ENCODE measurements at regions of chr2 and their contacts with region 1.

Region 1: DNA sequence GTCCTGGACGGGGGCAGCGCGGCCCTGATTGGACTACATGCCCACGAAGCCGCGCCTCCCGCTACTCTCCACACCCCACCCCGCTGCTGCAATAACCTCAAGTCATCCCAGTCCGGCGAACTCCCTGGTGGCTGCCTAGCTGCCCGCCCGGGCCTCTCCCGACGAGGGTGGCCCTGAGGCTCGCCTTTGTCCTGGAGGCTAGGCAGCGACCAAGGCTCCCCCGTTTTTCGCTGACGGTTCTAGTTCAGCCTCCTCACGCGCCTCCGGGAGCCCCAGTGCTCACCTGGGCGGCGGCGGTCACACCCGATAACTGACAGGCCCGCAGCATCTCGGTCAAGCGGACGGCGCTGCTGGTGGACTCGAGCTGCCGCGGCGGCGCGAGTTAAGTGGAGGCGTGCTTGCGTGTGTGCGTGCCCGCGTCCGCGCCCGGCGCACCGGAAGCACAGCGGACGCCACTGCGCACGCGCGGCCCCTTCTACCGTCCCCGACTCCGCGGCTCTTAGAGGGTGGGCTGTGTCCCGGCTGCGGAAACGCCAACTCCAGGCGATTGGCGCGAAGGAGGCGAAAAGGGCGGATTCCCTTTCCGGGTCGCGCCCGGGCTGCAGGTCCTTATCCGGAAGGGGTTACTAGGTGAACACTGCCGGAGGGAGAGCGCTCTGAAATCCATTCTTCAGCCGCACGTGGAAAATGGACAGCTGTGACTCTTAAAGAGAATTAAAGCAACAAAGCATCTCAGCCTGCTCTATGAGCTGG is at the start of gene IMMT:
- DNase-seq: peak; percentile 98
- ATAC-seq: peak; percentile 95
- total RNA-seq, gene IMMT: 287 TPM

Region 2: DNA sequence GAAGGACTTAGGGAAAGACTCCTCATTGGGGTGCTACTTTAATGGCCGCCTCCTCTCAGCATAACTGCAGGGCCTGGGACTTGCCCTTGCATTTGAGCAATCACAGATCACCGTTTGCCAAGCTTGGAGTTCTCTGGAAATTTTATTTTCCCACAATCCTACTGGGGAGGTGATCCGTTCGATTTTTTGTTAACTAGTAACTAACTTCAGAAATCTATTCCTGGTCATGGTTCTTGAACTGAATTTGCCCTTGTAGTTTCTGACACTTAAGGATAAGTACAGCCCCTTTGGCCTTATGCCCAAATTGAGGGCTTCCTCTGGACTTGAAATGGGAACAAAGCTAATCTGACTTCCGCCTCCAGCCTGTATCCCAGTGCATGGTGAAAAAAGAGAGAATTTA is 246.0 kb before region 1 on chr2:
- intact Hi-C with region 1: no loop called
- DNase-seq: no peak
- ATAC-seq: no peak

Region 3: GRCh38 chr2:86035883-86036668 is 159.2 kb before region 1 on chr2:
- intact Hi-C with region 1: no loop called
- DNase-seq: peak; percentile 92
- ATAC-seq: peak; percentile 86

Region 4: GRCh38 chr2:86747711-86748639 is 552.7 kb after region 1 on chr2:
- intact Hi-C with region 1: loop called (anchors 10 kb)
- DNase-seq: no peak
- ATAC-seq: no peak